Calu3 (cell line): ENCODE measurements at regions of chr17 and their contacts with region 1.

Region 1: DNA sequence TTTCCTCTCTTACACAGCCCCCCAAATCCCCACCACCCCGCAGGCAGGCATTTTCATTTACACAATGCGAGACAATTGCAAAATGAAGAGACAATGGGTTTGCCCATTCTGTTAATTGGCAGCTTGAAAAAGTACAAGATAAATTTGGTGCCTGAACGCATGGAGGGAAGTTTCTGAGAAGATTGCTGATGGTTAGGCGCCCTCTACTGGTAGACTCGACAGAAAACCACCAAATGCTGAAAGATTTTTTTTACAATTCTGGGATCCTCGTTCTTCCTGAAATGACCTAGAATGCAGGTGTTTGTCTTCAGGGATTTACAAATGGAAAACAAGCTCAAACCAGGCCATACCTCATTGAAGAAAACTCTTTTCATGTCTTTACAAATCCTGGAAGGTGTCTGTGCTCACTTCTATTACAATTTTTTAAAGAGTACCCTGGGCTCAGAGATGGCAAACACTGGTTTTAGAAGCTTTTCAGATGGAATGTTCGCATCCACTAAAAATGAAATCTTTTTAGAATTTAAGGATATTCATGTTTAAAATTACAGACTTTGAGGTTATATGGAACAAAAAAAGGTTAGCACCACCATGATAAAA is 338.5 kb downstream of the PMP22 start:
- DNase-seq: peak; percentile 51
- H3K4me3 Mint-ChIP-seq: no peak overlapping the region
- H3K27ac Mint-ChIP-seq: no peak overlapping the region
- H3K4me1 Mint-ChIP-seq: no peaks in the 10 kb centered on the region
- H3K27me3 Mint-ChIP-seq: no peaks in the 10 kb centered on the region
- CTCF ChIP-seq: peak; percentile 65

Region 2: DNA sequence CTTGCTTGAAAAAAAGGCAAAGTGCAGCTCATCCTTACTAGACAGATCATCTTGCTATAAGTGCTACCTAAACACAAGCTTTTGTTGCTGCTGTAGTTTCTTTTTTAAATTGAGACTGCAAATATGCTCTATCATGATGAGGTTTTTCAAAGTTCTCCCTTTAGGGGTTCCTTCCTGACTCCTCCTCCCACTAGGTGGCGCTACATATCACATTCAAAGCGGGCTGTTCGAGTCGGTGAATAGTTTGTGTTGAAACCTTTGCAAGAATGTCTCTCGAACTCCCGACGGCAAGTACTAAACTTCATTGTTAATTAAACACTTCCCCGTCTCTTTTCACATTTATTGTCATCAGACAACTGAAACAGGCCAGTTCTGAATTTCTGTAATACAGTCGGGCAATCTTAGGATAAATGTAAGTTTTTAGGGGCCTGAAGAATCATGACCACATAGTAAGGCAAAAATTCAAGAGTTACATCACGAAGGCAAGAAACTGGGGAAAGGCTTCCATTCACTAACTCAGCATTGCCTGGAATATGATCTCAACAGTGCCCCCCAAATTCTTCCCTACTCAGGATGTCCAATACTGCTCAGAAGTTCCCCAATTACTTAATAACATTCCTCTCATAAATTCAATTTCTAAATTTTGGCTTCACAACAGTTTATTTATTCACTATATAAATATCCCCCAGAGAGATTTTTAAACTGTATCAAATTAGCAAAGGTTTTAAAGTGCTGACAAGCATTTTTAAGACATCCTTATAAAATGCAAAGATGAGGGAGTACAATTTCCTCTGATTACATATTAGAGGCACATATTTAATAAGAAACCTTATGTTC is 1331.6 kb before region 1 on chr17:
- CTCF ChIA-PET with region 1: no interaction called
- intact Hi-C with region 1: loop called (anchors 2 kb)
- DNase-seq: peak; percentile 77
- H3K4me3 Mint-ChIP-seq: no peak overlapping the region
- H3K27ac Mint-ChIP-seq: no peak overlapping the region
- H3K4me1 Mint-ChIP-seq: no peaks in the 10 kb centered on the region
- H3K27me3 Mint-ChIP-seq: no peaks in the 10 kb centered on the region
- CTCF ChIP-seq: peak; percentile 45

Region 3: GRCh38 chr17:14308965-14309879 is 617.4 kb before region 1 on chr17:
- CTCF ChIA-PET with region 1: no interaction called
- intact Hi-C with region 1: loop called (anchors 5 kb)
- DNase-seq: peak; percentile 93
- H3K4me3 Mint-ChIP-seq: peak overlapping the region; percentile 70
- H3K27ac Mint-ChIP-seq: no peak overlapping the region
- H3K4me1 Mint-ChIP-seq: no peaks in the 10 kb centered on the region
- H3K27me3 Mint-ChIP-seq: peaks cover 43% of the 10 kb centered on the region
- CTCF ChIP-seq: no peak

Region 4: DNA sequence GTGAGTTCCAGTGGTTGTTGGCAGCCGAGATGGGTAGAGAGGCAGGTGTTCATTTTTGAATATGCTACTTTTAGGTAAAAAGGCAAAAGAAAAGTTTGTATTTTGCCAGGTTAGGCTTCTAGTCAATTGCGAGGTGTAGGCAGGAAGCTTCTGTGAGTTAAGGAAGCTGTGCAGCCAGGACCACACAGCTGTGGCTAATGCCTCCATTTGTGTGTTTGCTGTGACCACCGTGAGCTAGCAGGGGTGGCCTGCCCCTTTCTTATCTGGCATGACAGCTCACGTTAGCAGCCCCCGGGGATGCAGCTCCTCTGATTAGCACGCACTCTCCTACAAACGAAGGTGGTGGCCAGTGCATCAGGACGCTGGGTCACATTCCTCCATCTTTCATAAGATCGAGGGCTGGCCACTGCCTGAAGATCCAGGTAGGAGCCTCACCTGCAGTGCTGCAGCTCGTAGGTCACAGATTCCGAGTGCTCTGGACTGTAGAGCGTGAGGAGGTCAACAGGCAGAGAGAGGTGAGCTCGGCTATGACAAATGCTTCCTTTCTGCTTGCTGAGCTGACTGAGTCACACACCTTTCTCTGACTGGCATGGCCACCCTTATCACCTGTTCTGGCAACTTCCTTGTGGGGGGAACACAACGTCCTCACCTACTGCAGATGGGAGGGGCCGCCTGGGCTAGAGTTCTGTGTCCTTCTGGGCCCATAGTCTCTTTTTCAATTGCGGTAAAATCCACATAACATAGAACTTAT is 381.3 kb before region 1 on chr17:
- CTCF ChIA-PET with region 1: no interaction called
- intact Hi-C with region 1: loop called (anchors 10 kb)
- DNase-seq: peak; percentile 32
- H3K4me3 Mint-ChIP-seq: no peak overlapping the region
- H3K27ac Mint-ChIP-seq: no peak overlapping the region
- H3K4me1 Mint-ChIP-seq: no peaks in the 10 kb centered on the region
- H3K27me3 Mint-ChIP-seq: no peaks in the 10 kb centered on the region
- CTCF ChIP-seq: no peak

Region 5: DNA sequence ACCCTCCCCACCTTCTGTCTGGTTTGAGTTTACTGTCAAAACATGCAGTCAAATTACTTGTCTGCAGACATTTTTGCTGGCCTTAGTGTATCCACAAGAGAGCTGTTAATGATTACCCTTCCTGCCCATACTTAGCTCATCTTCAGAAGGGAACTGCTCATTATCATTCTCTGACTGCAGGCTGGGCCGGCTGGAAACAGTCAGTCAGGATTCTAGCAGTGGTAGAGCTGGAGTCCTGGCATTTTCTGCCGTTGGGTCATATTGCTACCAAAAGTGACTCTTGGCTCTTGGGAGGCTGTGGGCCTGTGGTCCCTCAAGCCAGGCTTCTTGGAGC is 165.6 kb before region 1 on chr17:
- CTCF ChIA-PET with region 1: no interaction called
- intact Hi-C with region 1: loop called (anchors 10 kb)
- DNase-seq: no peak
- H3K4me3 Mint-ChIP-seq: no peak overlapping the region
- H3K27ac Mint-ChIP-seq: no peak overlapping the region
- H3K4me1 Mint-ChIP-seq: peaks cover 8% of the 10 kb centered on the region
- H3K27me3 Mint-ChIP-seq: no peaks in the 10 kb centered on the region
- CTCF ChIP-seq: no peak

Region 6: DNA sequence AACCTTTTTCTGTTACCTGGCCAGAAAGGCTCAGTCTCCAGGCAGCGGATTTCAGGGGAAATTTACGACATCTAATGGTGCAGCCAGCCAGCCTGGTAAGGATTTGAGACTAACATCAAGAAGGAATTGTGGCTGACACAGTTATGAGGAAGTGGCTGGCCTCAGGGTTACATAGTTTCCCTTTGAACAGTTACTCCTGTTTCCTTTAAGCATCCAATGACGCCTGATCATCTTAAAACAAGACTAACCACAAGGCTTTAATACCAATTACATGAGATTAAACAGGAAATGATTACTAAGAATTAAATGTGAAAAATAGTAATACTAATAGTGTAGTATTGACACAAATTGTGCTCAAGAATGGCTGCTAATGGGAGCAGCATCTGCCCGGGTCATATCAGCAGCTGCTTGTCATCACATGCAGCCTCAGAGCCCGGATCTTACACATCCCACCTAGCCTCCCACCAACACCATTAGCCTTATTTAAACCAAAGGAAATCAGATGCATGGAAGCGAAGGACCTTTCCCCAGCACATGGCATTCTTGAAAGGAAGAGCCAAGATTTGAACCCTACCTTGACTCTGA is 93.3 kb before region 1 on chr17:
- CTCF ChIA-PET with region 1: no interaction called
- intact Hi-C with region 1: loop called (anchors 10 kb)
- DNase-seq: no peak
- H3K4me3 Mint-ChIP-seq: no peak overlapping the region
- H3K27ac Mint-ChIP-seq: no peak overlapping the region
- H3K4me1 Mint-ChIP-seq: no peaks in the 10 kb centered on the region
- H3K27me3 Mint-ChIP-seq: no peaks in the 10 kb centered on the region
- CTCF ChIP-seq: no peak

Region 7: GRCh38 chr17:15091825-15092224 is 165.2 kb after region 1 on chr17:
- CTCF ChIA-PET with region 1: no interaction called
- intact Hi-C with region 1: no loop called
- DNase-seq: peak; percentile 0
- H3K4me3 Mint-ChIP-seq: no peak overlapping the region
- H3K27ac Mint-ChIP-seq: no peak overlapping the region
- H3K4me1 Mint-ChIP-seq: no peaks in the 10 kb centered on the region
- H3K27me3 Mint-ChIP-seq: peaks cover 8% of the 10 kb centered on the region
- CTCF ChIP-seq: no peak

Region 8: GRCh38 chr17:15143524-15143923 is 216.9 kb after region 1 on chr17:
- CTCF ChIA-PET with region 1: no interaction called
- intact Hi-C with region 1: no loop called
- DNase-seq: no peak
- H3K4me3 Mint-ChIP-seq: no peak overlapping the region
- H3K27ac Mint-ChIP-seq: no peak overlapping the region
- H3K4me1 Mint-ChIP-seq: no peaks in the 10 kb centered on the region
- H3K27me3 Mint-ChIP-seq: no peaks in the 10 kb centered on the region
- CTCF ChIP-seq: no peak